HCT116 (cell line): ENCODE measurements at regions of chr5 and their contacts with region 1.

Region 1: GRCh38 chr5:91101600-91102379 is 281.3 kb downstream of the ARRDC3 start:
- DNase-seq: peak; percentile 76
- ATAC-seq: peak; percentile 100
- H3K4me3 ChIP-seq: no peak overlapping the region
- H3K27ac ChIP-seq: no peak overlapping the region
- H3K4me1 ChIP-seq: peaks cover 0 to 4% of the 10 kb centered on the region in 2 experiments; a peak in 1 of 4 replicates
- H3K27me3 ChIP-seq: no peaks in the 10 kb centered on the region
- CTCF ChIP-seq: peak; percentile 71 to 95 (median 84)
- POLR2A ChIP-seq: no peak
- RAD21 ChIP-seq: peak; percentile 97

Region 2: GRCh38 chr5:90866333-90866732 is 235.5 kb before region 1 on chr5:
- CTCF ChIA-PET with region 1: no interaction called
- POLR2A ChIA-PET with region 1: no interaction called
- RAD21 ChIA-PET with region 1: no interaction called
- intact Hi-C with region 1: loop called (anchors 5 kb)
- DNase-seq: peak; percentile 27
- ATAC-seq: peak; percentile 80
- H3K4me3 ChIP-seq: no peak overlapping the region
- H3K27ac ChIP-seq: no peak overlapping the region
- H3K4me1 ChIP-seq: no peaks in the 10 kb centered on the region
- H3K27me3 ChIP-seq: no peaks in the 10 kb centered on the region
- CTCF ChIP-seq: peak; percentile 29 to 66 (median 65); a peak in 4 of 6 replicates
- POLR2A ChIP-seq: no peak
- RAD21 ChIP-seq: peak; percentile 83

Region 3: GRCh38 chr5:91225848-91226686 is 124.3 kb after region 1 on chr5:
- CTCF ChIA-PET with region 1: no interaction called
- POLR2A ChIA-PET with region 1: no interaction called
- RAD21 ChIA-PET with region 1: no interaction called
- intact Hi-C with region 1: loop called (anchors 2 kb)
- DNase-seq: peak; percentile 59
- ATAC-seq: peak; percentile 96
- H3K4me3 ChIP-seq: no peak overlapping the region
- H3K27ac ChIP-seq: no peak overlapping the region
- H3K4me1 ChIP-seq: 0 out of 4 replicates have a peak, but pooled peaks cover 0 to 5% of the 10 kb centered on the region in 2 experiments
- H3K27me3 ChIP-seq: no peaks in the 10 kb centered on the region
- CTCF ChIP-seq: peak; percentile 58 to 98 (median 74)
- POLR2A ChIP-seq: no peak
- RAD21 ChIP-seq: peak; percentile 98

Region 4: GRCh38 chr5:91403438-91403837 is 301.6 kb after region 1 on chr5:
- CTCF ChIA-PET with region 1: no interaction called
- POLR2A ChIA-PET with region 1: no interaction called
- RAD21 ChIA-PET with region 1: no interaction called
- intact Hi-C with region 1: loop called (anchors 5 kb)
- DNase-seq: no peak
- ATAC-seq: no peak
- H3K4me3 ChIP-seq: no peak overlapping the region
- H3K27ac ChIP-seq: no peak overlapping the region
- H3K4me1 ChIP-seq: no peaks in the 10 kb centered on the region
- H3K27me3 ChIP-seq: no peaks in the 10 kb centered on the region
- CTCF ChIP-seq: no peak
- POLR2A ChIP-seq: no peak
- RAD21 ChIP-seq: no peak